Activated CD4-positive, alpha-beta T cell treated with anti-CD3 and anti-CD28 coated beads, Interleukin-2, amount 10 ng/mL, durations not matched to agents 7 days and 5 days (primary cell): ENCODE measurements at regions of chr1 and their contacts with region 1.

Region 1: DNA sequence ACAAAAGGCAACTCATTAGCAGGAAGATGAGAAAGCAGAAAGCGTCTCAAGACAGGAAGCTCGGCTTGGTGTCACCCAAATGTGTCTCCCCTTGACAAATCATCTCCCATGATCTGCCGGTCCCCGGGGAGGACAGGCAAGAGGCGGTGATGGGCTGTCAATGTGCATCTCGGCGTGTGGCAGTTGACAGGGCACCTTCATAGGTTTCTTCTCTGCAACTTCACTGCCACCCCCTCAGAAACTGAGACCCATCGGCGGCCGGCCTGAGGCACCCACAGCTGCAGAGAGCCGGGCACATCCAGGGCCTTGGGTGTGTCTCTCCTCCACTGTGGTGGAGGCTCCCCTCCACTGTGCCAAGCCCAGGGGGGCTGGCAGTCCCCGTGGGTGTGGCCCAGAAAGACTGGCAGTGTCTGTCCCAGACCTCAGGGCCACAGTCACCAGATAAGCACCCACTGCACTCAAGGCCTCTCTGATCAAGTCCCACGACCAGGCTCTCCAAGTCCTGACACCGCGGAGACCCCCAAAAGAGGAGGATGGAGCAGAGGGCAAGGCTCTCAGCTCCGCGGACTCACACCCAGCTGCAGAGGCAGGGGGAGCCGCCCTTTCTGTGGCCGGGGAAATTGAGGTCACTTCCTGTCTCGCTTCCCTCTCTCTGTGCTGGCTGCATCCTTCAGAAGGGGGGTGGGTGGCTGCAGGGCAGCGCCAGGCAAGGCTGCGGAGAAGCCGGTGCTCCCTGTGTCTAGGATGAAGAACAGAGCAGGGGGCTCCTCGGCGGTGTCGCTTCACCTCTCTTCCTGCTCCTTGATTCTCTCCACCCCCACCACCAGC is 39.6 kb upstream of the LBR start:
- DNase-seq: peak; percentile 92
- H3K4me3 Mint-ChIP-seq: peak overlapping the region; percentile 89
- H3K27ac Mint-ChIP-seq: peak overlapping the region; percentile 99
- H3K4me1 Mint-ChIP-seq: peaks cover 68% of the 10 kb centered on the region
- H3K27me3 Mint-ChIP-seq: no peaks in the 10 kb centered on the region

Region 2: GRCh38 chr1:225447650-225448089 is 19.7 kb before region 1 on chr1:
- CTCF ChIA-PET with region 1: interaction called, 14 read pairs
- POLR2A ChIA-PET with region 1: interaction called, 9 read pairs
- DNase-seq: no peak
- H3K4me3 Mint-ChIP-seq: no peak overlapping the region
- H3K27ac Mint-ChIP-seq: peak overlapping the region; percentile 7
- H3K4me1 Mint-ChIP-seq: peaks cover 61% of the 10 kb centered on the region
- H3K27me3 Mint-ChIP-seq: no peaks in the 10 kb centered on the region

Region 3: GRCh38 chr1:225480825-225481434 is 13.5 kb after region 1 on chr1:
- CTCF ChIA-PET with region 1: interaction called, 10 read pairs
- POLR2A ChIA-PET with region 1: no interaction called
- DNase-seq: peak; percentile 64
- H3K4me3 Mint-ChIP-seq: no peak overlapping the region
- H3K27ac Mint-ChIP-seq: no peak overlapping the region
- H3K4me1 Mint-ChIP-seq: peaks cover 33% of the 10 kb centered on the region
- H3K27me3 Mint-ChIP-seq: peaks cover 5% of the 10 kb centered on the region